Activated T-helper 2 cell treated with anti-CD3 and anti-CD28 coated beads, Interferon-gamma antibody, Interleukin-2, Interleukin-4, amounts not matched to agents 10 μg/mL and 5 μg/mL and 100 μg/mL, durations not matched to agents 14 hours and 24 hours and 36 hours (primary cell): ENCODE measurements at regions of chr1 and their contacts with region 1.

Region 1: GRCh38 chr1:209784265-209785169 is at the start of gene C1orf74:
- DNase-seq: peak; percentile 99
- H3K4me3 Mint-ChIP-seq: peak within 1 kb of the TSS; percentile 87
- H3K27ac Mint-ChIP-seq: peak within 1 kb of the TSS; percentile 92
- H3K4me1 Mint-ChIP-seq: peaks cover 51% of the 10 kb centered on the region
- H3K27me3 Mint-ChIP-seq: no peaks in the 10 kb centered on the region
- total RNA-seq, gene C1orf74: 2.8 and 3.0 TPM in 2 replicates

Region 2: DNA sequence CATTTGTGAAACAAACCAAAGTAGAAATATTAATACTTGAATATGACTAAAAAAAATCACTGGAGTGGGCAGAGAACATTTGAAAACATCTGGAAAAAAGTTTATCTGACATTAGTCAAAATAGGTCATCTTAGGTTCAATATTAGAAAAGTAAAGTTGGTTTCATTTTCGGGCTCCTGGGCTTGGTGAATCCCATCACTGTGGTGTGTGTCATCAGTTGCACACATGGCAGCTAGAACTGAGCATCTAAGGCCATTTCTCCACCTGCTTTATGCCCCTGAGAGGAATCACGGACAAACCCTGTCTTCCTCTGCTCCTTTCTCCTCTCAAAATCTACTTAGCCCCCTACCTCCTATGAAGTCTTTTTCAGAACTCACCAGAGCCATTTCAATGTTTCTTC is 74.4 kb before region 1 on chr1:
- intact Hi-C with region 1: no loop called
- DNase-seq: no peak
- H3K4me3 Mint-ChIP-seq: peak overlapping the region; percentile 10
- H3K27ac Mint-ChIP-seq: peak overlapping the region; percentile 92
- H3K4me1 Mint-ChIP-seq: peaks cover 79% of the 10 kb centered on the region
- H3K27me3 Mint-ChIP-seq: no peaks in the 10 kb centered on the region

Region 3: GRCh38 chr1:209755926-209756614 is 28.4 kb before region 1 on chr1 and contains the start of gene TRAF3IP3:
- intact Hi-C with region 1: loop called (anchors 1 kb)
- DNase-seq: peak; percentile 75
- H3K4me3 Mint-ChIP-seq: peak within 1 kb of the TSS; percentile 97
- H3K27ac Mint-ChIP-seq: peak within 1 kb of the TSS; percentile 97
- H3K4me1 Mint-ChIP-seq: peaks cover 65% of the 10 kb centered on the region
- H3K27me3 Mint-ChIP-seq: no peaks in the 10 kb centered on the region
- total RNA-seq, gene TRAF3IP3: 386 and 390 TPM in 2 replicates